Aorta (tissue), 5 donors: ENCODE measurements at regions of chr9 and their contacts with region 1.

Region 1: DNA sequence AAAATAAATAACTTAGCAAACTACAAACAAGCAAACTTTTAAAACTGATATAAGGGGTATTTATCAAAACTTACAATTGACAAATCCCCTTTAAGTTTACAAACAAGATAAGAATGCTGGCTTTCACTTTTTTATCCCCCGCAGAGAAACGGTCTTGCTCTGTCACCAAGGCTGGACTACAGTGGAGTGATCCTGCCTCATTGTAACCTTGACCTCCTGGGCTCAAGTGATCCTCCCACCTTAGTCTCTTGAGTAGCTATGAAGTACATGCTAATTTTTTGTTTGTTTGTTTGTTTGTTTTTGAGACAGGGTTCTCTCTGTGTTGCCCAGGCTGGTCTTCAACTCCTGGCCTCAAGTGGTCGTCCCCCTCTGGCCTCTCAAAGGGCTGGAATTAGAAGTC is 9.0 kb upstream of the NIPSNAP3A start:
- DNase-seq: no peak
- ATAC-seq: no peak
- H3K4me3 ChIP-seq: no peak overlapping the region
- H3K27ac ChIP-seq: no peak overlapping the region
- H3K4me1 ChIP-seq: no peaks in the 10 kb centered on the region
- H3K27me3 ChIP-seq: no peaks in the 10 kb centered on the region

Region 2: GRCh38 chr9:104027295-104027694 is 711.2 kb before region 1 on chr9:
- intact Hi-C with region 1: loop called in 1 of 2 experiments (anchors 10 kb)
- DNase-seq: no peak
- ATAC-seq: no peak
- H3K4me3 ChIP-seq: no peak overlapping the region
- H3K27ac ChIP-seq: no peak overlapping the region
- H3K4me1 ChIP-seq: no peaks in the 10 kb centered on the region
- H3K27me3 ChIP-seq: no peaks in the 10 kb centered on the region

Region 3: DNA sequence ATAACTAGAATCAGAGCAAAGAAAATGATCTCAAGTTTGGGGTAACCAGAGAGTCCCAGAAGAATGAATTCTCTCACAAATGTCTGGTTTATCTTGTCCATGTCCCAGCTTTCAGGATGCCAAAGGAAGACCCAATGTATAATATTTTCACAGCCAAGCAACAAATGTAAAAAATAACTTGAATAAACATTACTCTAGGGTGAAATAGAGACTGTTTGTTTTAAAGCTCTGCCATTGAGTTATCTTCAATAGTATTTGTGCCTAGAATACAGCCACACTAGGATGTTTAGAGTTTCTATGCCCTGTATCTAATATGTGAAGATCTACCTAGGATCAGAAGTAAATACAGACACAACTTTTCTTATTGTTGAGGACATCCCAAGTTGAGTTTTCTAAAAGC is 211.3 kb before region 1 on chr9 and contains the start of gene OR13C4:
- intact Hi-C with region 1: no loop called
- DNase-seq: no peak
- ATAC-seq: no peak
- H3K4me3 ChIP-seq: no peak within 1 kb of the TSS
- H3K27ac ChIP-seq: no peak within 1 kb of the TSS
- H3K4me1 ChIP-seq: no peaks in the 10 kb centered on the region
- H3K27me3 ChIP-seq: no peaks in the 10 kb centered on the region
- total RNA-seq, gene OR13C4: not detected